H1 (cell line): ENCODE measurements at regions of chr6 and their contacts with region 1.

Region 1: DNA sequence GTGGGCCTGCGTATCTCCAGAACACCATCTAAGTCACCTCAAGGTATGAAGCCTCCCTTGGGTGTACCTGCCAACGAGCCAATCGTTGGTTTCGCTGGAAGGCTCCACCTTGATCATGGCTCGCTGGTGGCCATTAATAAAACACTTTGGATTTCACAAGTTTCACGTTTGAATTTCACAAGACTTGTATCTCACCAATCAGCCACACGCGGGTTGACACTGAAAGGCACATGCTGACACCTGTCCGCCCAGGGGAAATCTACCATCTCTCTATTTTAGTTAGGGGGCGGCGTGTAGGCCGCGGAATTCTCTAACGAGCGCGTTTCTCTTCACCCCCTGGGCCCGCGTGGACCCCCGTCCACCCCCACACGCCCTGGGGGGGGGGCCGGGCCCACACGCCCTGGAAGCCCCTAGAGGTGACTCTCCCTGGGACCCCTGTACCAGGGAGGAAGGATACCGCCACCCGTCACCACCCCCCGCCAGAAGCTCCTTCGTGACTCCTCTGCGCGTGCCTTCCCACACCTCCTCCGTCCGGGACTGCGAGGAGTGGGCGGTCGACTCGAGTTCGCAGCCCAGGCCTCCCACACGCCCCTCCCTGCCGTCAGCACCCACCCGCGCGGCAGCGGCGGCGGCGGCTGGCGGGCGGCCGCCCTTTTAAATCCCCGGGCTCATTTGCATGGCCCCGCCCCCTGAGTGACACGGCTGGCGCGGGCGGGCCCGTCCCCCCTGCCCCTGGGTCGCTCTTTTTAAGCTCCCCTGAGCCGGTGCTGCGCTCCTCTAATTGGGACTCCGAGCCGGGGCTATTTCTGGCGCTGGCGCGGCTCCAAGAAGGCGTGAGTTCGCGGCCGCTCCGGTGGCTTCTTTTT is at the start of gene HMGA1:
- DNase-seq: peak in 1 of 2 experiments; percentile 84
- H3K4me3 ChIP-seq: peak within 1 kb of the TSS; percentile 86 to 100 (median 98)
- H3K27ac ChIP-seq: peak within 1 kb of the TSS; percentile 96
- H3K4me1 ChIP-seq: peaks cover 0 to 36% (median 26%) of the 10 kb centered on the region in 4 experiments; a peak in 6 of 7 replicates
- H3K27me3 ChIP-seq: no peaks in the 10 kb centered on the region
- CTCF ChIP-seq: no peak
- EP300 ChIP-seq: 0 out of 3 replicates have a peak, but pooled peaks of 1 of the 2 experiments have one; percentile 27
- POLR2A ChIP-seq: peak in 1 of 2 experiments; percentile 96; a peak in 2 of 3 replicates
- RAD21 ChIP-seq: peak in 1 of 2 experiments; percentile 20; a peak in 1 of 4 replicates
- total RNA-seq, gene HMGA1: 2,636 and 2,728 TPM in 2 replicates

Region 2: DNA sequence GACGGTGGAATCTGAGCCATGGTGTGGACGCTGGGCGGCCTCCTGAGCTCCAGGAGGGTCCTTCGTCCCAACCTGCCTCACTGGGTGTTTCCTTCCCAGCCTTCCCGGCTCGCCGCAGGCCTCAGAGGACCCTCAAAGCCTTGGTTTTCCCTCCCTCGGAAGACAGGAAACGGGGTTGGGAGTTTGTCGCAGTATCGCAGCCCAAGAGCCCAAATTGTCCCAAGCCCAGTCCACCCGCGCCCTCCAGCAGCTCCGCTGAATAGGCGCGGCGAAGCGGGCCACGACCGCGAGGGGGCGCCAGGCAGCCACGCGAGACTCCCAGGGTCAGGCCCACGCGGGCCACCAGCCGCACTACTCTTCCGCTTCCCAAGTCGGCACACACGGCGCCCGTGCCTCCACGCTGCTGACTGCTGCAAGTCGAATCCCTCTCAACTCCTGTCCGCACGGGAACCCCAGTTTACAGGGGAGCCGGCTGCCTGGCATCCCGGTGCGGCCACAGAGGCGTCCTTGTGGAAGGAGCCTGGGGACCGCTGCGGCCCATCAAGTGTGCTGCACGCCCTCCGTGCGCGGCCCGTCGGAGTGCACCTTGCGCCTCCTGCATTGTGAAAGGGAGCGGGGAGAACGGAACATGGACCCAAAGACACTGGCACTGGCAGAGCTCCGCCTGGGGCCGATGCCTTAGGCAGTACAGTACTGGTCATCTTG is 40.1 kb before region 1 on chr6:
- CTCF ChIA-PET with region 1: interaction called, 29 read pairs
- POLR2A ChIA-PET with region 1: interaction called, 212 read pairs
- DNase-seq: peak in 1 of 2 experiments; percentile 91
- H3K4me3 ChIP-seq: peak overlapping the region in 2 of 4 experiments; percentile 23 to 34; a peak in 4 of 8 replicates
- H3K27ac ChIP-seq: no peak overlapping the region
- H3K4me1 ChIP-seq: peaks cover 0 to 12% (median 5%) of the 10 kb centered on the region in 4 experiments; a peak in 5 of 7 replicates
- H3K27me3 ChIP-seq: peaks cover 0 to 13% (median 4%) of the 10 kb centered on the region in 4 experiments; a peak in 4 of 7 replicates
- CTCF ChIP-seq: peak; percentile 78 to 85 (median 79)
- EP300 ChIP-seq: peak in 1 of 2 experiments; percentile 28; a peak in 1 of 3 replicates
- POLR2A ChIP-seq: no peak
- RAD21 ChIP-seq: peak; percentile 74 to 76

Region 3: DNA sequence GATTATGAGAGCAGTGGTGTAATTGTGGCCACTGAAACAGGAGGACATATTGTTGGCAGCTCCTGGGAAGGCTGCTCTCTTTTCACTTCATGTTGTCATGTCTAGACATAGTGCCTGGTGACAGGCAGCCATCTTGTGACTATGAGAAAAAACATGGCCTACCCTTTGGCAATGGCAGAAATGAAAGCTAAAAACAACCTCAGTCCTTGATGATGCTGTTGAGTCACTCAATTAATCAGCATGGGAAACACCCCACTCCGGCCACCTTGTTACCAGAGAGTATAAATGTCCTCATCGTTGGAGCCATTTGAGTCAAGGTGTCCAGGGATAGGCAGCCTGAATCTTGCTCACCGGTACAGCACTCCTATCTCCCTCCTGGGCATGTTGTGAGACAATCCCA is 30.9 kb before region 1 on chr6:
- CTCF ChIA-PET with region 1: interaction called, 7 read pairs
- POLR2A ChIA-PET with region 1: interaction called, 212 read pairs
- DNase-seq: no peak
- H3K4me3 ChIP-seq: no peak overlapping the region
- H3K27ac ChIP-seq: no peak overlapping the region
- H3K4me1 ChIP-seq: peaks cover 2 to 9% (median 4%) of the 10 kb centered on the region in 4 experiments; a peak in 4 of 7 replicates
- H3K27me3 ChIP-seq: no peaks in the 10 kb centered on the region
- CTCF ChIP-seq: no peak
- EP300 ChIP-seq: no peak
- POLR2A ChIP-seq: no peak
- RAD21 ChIP-seq: no peak

Region 4: GRCh38 chr6:34218448-34219090 is 17.8 kb before region 1 on chr6:
- CTCF ChIA-PET with region 1: interaction called, 6 read pairs
- POLR2A ChIA-PET with region 1: interaction called, 144 read pairs
- DNase-seq: no peak
- H3K4me3 ChIP-seq: no peak overlapping the region
- H3K27ac ChIP-seq: no peak overlapping the region
- H3K4me1 ChIP-seq: peaks cover 0 to 9% (median 8%) of the 10 kb centered on the region in 4 experiments; a peak in 6 of 7 replicates
- H3K27me3 ChIP-seq: no peaks in the 10 kb centered on the region
- CTCF ChIP-seq: no peak
- EP300 ChIP-seq: no peak
- POLR2A ChIP-seq: no peak
- RAD21 ChIP-seq: no peak

Region 5: DNA sequence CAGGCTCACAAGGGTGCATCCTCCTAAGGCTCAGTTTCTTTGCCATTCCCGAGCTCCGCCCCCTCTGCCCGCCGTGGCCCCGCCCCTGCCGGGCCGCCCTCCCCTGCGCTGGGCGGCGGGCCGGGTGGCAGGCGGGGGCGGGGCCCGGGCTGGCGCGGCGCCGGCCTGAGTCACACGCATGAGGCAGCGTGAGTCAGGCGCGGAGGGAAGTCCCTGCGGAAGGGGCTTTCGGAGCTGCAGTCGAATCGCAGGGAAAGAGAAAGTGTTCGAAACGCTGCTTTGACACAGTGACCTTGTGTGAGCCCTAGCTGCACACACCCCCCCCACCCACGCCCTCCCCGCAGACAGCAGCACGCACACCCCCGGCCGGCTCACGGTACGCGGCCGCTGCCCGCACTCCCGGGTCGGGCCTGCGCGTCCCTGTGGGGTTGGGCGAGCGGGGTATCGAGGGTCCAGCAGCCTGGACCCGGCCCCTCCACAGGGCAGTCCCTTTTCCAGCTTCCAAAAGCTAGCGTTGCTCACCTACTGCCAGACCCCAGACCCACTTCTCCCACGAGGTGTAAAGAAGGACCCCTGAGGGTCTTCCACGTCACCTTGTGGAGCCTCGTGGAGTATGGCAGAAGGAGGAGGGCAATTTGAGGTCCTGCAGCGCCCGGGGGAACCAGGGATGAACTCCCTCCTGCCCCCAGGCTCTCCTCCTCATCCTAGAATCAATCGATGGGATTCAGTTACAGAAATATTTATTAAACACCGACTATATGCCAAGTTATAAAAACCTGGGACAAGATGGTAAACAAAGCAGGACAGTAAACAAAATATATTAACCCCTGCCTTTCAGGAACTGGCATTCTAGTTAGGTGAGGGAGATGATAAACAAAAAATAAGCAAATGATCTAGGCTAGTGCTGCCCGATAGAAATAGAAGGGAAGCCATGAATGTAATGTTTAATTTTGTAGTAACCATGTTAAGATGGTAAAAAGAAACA is 12.1 kb before region 1 on chr6:
- CTCF ChIA-PET with region 1: interaction called, 6 read pairs
- POLR2A ChIA-PET with region 1: interaction called, 191 read pairs
- DNase-seq: peak in 1 of 2 experiments; percentile 95
- H3K4me3 ChIP-seq: peak overlapping the region; percentile 28 to 57 (median 36)
- H3K27ac ChIP-seq: peak overlapping the region; percentile 67
- H3K4me1 ChIP-seq: peaks cover 10 to 37% (median 30%) of the 10 kb centered on the region in 4 experiments
- H3K27me3 ChIP-seq: no peaks in the 10 kb centered on the region
- CTCF ChIP-seq: no peak
- EP300 ChIP-seq: no peak
- POLR2A ChIP-seq: peak in 1 of 2 experiments; percentile 65; a peak in 2 of 3 replicates
- RAD21 ChIP-seq: no peak

Region 6: DNA sequence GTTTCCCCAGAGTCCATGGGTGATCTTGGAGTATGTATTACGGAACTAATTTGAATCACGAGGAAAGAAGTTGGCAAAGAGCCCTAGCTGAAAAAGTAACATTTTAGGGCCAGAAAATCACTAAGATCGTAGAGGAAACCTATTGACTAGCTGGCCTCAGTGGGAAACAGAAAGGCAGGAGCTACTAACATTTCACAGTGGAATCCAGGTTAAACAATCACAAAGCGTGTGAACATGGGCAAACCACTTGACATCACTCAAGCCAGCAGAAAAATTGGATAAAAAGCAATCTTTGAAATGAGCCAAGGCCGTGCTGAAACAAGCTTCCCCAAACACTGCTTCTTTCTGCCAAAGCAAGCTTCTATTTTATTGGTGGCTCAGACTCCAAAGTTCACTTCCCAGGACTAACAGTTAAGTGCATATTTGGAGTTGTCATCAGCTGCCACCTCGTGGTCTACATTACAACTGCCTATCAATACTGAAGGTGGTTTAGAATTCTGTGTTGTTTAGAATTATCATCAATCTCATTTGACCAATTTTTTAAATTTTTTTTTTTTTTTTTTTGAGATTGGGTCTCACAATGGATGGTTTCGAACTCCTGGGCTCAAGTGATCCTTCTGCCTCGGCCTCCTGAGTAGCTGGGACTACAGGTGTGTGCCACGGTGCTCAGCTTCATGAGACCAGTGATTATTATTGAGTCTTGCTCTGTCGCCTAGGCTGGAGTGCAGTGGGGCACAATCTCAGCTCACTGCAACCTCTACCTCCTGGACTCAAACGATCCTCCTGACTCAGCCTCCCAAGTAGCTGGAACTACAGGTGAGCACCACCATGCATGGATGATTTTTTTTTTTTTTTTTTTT is 178.9 kb after region 1 on chr6:
- CTCF ChIA-PET with region 1: no interaction called
- POLR2A ChIA-PET with region 1: interaction called, 10 read pairs
- DNase-seq: no peak
- H3K4me3 ChIP-seq: no peak overlapping the region
- H3K27ac ChIP-seq: no peak overlapping the region
- H3K4me1 ChIP-seq: no peaks in the 10 kb centered on the region
- H3K27me3 ChIP-seq: no peaks in the 10 kb centered on the region
- CTCF ChIP-seq: peak in 2 of 3 experiments; percentile 6 to 20; a peak in 2 of 4 replicates
- EP300 ChIP-seq: no peak
- POLR2A ChIP-seq: peak in 1 of 2 experiments; percentile 36; a peak in 2 of 3 replicates
- RAD21 ChIP-seq: peak; percentile 45 to 54; a peak in 3 of 4 replicates

Region 7: GRCh38 chr6:34425498-34426410 is 189.4 kb after region 1 on chr6 and contains the start of gene RPS10:
- CTCF ChIA-PET with region 1: interaction called, 6 read pairs
- POLR2A ChIA-PET with region 1: interaction called, 13 read pairs
- DNase-seq: peak; percentile 75 to 97
- H3K4me3 ChIP-seq: peak within 1 kb of the TSS; percentile 91 to 99 (median 95)
- H3K27ac ChIP-seq: peak within 1 kb of the TSS; percentile 92
- H3K4me1 ChIP-seq: peaks cover 0 to 11% (median 4%) of the 10 kb centered on the region in 4 experiments; a peak in 5 of 7 replicates
- H3K27me3 ChIP-seq: no peaks in the 10 kb centered on the region
- CTCF ChIP-seq: no peak
- EP300 ChIP-seq: no peak
- POLR2A ChIP-seq: peak; percentile 93 to 96
- RAD21 ChIP-seq: 0 out of 4 replicates have a peak, but pooled peaks have one; percentile 3 to 16
- total RNA-seq, gene RPS10: 2,408 and 2,434 TPM in 2 replicates

Region 8: DNA sequence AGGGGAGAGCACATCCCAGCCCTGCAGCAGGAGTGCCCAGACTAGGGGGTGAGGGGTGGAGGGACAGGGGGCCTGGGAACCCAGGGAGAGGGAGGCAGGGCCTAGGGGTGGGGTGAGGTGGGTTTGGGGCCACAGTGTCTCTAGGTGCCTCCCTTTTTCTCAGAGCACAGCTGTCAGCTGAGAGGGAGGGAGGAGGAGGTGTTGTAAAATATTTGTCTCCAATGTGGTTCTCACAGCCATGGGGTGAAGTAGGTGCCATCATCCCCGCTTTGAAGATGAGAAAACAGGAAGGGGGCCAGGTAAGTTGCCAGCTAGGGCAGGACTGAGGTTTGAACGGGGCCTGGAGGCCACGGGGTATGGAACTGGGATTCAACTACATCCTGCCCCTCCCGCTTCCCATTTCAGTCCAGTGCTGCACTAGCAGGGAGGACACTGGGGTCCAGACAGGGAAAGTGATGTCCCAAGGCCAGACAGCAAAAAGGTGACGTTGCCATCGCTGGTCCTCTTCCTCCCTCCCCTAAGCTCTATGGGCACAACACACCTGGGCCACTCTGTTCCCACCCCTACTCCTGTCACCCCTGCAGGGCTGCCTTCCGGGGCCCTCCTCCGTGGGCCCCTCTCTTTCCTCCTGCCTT is 249.9 kb after region 1 on chr6:
- CTCF ChIA-PET with region 1: no interaction called
- POLR2A ChIA-PET with region 1: no interaction called
- DNase-seq: no peak
- H3K4me3 ChIP-seq: no peak overlapping the region
- H3K27ac ChIP-seq: no peak overlapping the region
- H3K4me1 ChIP-seq: peaks cover 0 to 7% (median 0%) of the 10 kb centered on the region in 4 experiments; a peak in 2 of 7 replicates
- H3K27me3 ChIP-seq: no peaks in the 10 kb centered on the region
- CTCF ChIP-seq: no peak
- EP300 ChIP-seq: no peak
- POLR2A ChIP-seq: no peak
- RAD21 ChIP-seq: no peak